Breast epithelium (tissue), 4 donors: ENCODE measurements at regions of chr7 and their contacts with region 1.

Region 1: GRCh38 chr7:37211097-37211880 is 237.4 kb downstream of the ELMO1 start:
- DNase-seq: no peak
- H3K4me3 ChIP-seq: no peak overlapping the region
- H3K27ac ChIP-seq: peak overlapping the region; percentile 51 to 76
- H3K4me1 ChIP-seq: peaks cover 0 to 4% of the 10 kb centered on the region in 2 donors
- H3K27me3 ChIP-seq: no peaks in the 10 kb centered on the region
- CTCF ChIP-seq: no peak
- POLR2A ChIP-seq: no peak

Region 2: DNA sequence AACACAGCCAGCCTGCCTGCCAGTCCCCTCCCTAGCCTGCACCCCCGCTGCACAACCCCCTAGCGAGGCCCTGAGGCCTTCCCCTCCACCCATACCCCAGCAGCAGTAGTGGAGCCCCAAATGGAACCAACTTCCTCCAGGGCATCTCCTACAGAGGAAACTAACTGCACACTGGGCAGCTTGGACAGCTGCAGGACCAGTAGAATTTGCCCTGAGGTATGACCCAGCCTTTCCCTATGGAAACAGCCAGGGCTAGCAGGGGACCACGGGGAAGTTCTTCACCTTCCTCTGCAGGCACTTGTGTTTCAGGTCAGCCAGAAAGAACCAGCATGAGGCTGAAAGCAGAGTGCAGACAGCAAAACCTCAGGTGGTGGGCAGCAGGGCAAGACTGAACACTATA is 1064.0 kb before region 1 on chr7:
- intact Hi-C with region 1: loop called (anchors 10 kb)
- DNase-seq: no peak
- H3K4me3 ChIP-seq: no peak overlapping the region
- H3K27ac ChIP-seq: no peak overlapping the region
- H3K4me1 ChIP-seq: no peaks in the 10 kb centered on the region
- H3K27me3 ChIP-seq: no peaks in the 10 kb centered on the region
- CTCF ChIP-seq: no peak
- POLR2A ChIP-seq: no peak

Region 3: GRCh38 chr7:37275078-37275710 is 63.9 kb after region 1 on chr7:
- intact Hi-C with region 1: no loop called
- DNase-seq: no peak
- H3K4me3 ChIP-seq: no peak overlapping the region
- H3K27ac ChIP-seq: peak overlapping the region in 1 of 2 donors; percentile 7
- H3K4me1 ChIP-seq: no peaks in the 10 kb centered on the region
- H3K27me3 ChIP-seq: no peaks in the 10 kb centered on the region
- CTCF ChIP-seq: no peak
- POLR2A ChIP-seq: no peak

Region 4: DNA sequence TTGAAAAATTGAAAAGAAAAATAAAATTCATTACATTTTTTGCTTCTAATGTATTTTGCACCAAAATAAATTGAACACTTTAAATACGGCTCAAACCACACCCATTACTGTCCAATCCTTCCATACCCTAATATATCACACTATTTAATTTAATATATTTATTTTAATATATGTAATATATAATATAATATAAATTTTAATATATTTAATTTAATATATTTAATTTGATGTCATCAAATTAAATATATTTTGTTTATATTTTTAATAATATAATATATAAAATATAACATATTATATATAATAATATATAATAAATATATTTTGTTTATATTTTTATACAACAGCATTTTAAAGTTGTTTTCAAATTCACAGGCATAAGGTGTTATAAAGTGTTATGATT is 1750.7 kb after region 1 on chr7:
- intact Hi-C with region 1: loop called (anchors 10 kb)
- DNase-seq: no peak
- H3K4me3 ChIP-seq: no peak overlapping the region
- H3K27ac ChIP-seq: no peak overlapping the region
- H3K4me1 ChIP-seq: no peaks in the 10 kb centered on the region
- H3K27me3 ChIP-seq: no peaks in the 10 kb centered on the region
- CTCF ChIP-seq: no peak
- POLR2A ChIP-seq: no peak